Mammary epithelial cell (primary cell): ENCODE measurements at regions of chr7 and their contacts with region 1.

Region 1: GRCh38 chr7:138809346-138809745 is 11.3 kb upstream of the ATP6V0A4 start:
- DNase-seq: no peak
- H3K4me3 ChIP-seq: no peak overlapping the region
- H3K27ac ChIP-seq: no peak overlapping the region
- H3K4me1 ChIP-seq: no peaks in the 10 kb centered on the region
- H3K27me3 ChIP-seq: peaks cover 1% of the 10 kb centered on the region
- CTCF ChIP-seq: no peak

Region 2: DNA sequence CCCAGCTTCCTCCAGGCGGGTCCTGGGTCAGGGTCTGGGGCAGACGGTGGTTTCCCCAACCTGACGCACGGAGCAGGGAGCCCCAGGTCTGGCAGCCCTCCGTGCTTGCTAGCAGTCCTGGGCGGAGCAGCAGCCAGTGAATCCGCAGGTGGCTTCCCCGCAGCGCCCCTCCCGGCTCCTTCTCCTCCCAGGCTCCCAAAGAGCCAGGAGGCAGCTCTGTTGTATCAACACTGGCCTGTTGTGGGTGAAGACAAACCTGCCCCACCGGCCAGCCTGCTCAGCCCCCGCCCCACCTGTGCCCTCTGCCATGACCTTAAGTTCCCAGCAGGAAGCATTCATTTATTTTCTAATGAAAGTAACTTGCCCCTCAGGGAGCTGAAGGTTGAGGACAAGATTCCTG is 35.5 kb before region 1 on chr7:
- CTCF ChIA-PET with region 1: no interaction called
- dilution Hi-C with region 1: loop called (anchors 5 kb)
- in situ Hi-C with region 1: no loop called
- intact Hi-C with region 1: loop called (anchors 2 kb)
- DNase-seq: no peak
- H3K4me3 ChIP-seq: no peak overlapping the region
- H3K27ac ChIP-seq: no peak overlapping the region
- H3K4me1 ChIP-seq: no peaks in the 10 kb centered on the region
- H3K27me3 ChIP-seq: no peaks in the 10 kb centered on the region
- CTCF ChIP-seq: no peak

Region 3: DNA sequence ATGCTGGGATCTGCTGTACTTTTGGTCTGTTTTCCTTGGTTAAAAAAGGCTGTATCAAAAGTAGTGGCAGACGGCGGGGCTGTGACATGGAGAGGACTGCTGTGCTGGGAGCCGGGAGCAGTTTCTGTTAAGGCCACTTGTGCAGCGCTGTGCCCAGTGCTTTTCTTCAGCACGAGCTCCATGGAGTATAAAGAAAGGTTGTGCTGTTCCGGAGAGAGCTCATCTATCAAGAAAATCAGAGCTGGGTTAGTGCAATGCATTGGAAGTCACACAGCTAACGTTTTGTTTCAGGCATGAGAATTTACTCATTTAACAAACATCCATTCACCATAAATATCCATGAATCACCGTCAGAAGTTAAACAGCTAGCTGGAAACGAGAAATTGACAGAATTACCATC is 109.9 kb after region 1 on chr7:
- CTCF ChIA-PET with region 1: no interaction called
- dilution Hi-C with region 1: no loop called
- in situ Hi-C with region 1: no loop called
- intact Hi-C with region 1: no loop called
- DNase-seq: no peak
- H3K4me3 ChIP-seq: no peak overlapping the region
- H3K27ac ChIP-seq: no peak overlapping the region
- H3K4me1 ChIP-seq: no peaks in the 10 kb centered on the region
- H3K27me3 ChIP-seq: no peaks in the 10 kb centered on the region
- CTCF ChIP-seq: no peak